ENCODE measurements at regions of chr10 and their contacts with region 1.

Region 1: DNA sequence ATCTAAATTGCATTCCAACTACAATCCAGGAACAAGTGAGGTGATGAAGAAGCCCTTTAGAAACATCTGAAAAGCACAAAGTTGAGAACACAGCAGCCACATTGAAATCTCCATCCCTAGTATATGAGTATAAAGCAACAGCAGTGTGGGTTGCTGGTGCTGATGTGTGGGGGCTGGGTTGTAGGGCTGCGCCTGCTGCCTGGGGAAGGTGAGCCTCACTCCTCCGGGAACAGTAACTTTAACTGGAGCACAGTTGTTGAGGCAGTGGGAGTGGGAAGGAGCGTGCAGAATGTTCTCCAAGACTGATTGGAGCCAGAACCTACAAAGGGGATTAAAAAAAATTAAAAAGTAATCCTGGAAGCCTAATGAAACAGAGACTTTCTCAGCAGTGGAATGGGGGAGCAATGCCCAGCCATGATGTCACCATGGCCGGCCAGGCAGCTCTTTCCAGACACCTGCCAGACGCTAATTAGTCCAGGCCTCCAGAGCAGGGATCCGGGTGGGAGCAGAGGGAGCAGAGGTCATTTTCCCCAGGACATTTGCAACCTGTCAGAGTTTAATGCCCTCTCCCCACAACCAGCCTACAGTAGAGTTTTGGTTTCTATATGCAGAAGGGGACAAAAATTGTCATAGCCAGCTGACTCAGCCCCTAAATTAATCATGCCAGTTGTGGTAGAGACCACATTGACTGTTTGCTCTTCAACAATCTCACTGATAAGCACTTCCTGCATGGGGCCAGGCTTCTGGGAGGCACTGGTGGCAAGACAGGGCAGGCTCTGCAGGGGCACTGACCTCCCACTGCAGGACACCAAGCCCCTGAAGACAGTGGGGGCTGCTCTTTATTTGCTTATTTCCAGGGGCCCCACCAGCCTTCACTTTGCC is 133.0 kb upstream of the ZNF32 start:
- DNase-seq: peak; percentile 6
- ATAC-seq: no peak; the same call in 2 of the 3 replicates
- H3K4me3 ChIP-seq: no peak overlapping the region
- H3K27ac ChIP-seq: no peak overlapping the region
- H3K4me1 ChIP-seq: peaks cover 11% of the 10 kb centered on the region; the same call in 1 of the 2 replicates
- H3K27me3 ChIP-seq: peaks cover 0 to 5% of the 10 kb centered on the region in 2 experiments; a peak in 1 of 5 replicates
- CTCF ChIP-seq: no peak
- EP300 ChIP-seq: no peak
- POLR2A ChIP-seq: no peak
- RAD21 ChIP-seq: no peak

Region 2: GRCh38 chr10:43689955-43690771 is 91.6 kb before region 1 on chr10:
- CTCF ChIA-PET with region 1: interaction called, 3 read pairs
- POLR2A ChIA-PET with region 1: no interaction called
- in situ Hi-C with region 1: no loop called
- intact Hi-C with region 1: loop called (anchors 10 kb)
- DNase-seq: peak; percentile 27
- ATAC-seq: peak; percentile 99
- H3K4me3 ChIP-seq: peak overlapping the region in 1 of 3 experiments; percentile 24; a peak in 1 of 6 replicates
- H3K27ac ChIP-seq: no peak overlapping the region
- H3K4me1 ChIP-seq: no peaks in the 10 kb centered on the region
- H3K27me3 ChIP-seq: peaks cover 0 to 3% of the 10 kb centered on the region in 2 experiments; a peak in 1 of 5 replicates
- CTCF ChIP-seq: peak; percentile 82
- EP300 ChIP-seq: no peak
- POLR2A ChIP-seq: no peak
- RAD21 ChIP-seq: peak; percentile 92